ENCODE measurements at regions of chr14 and their contacts with region 1.

Region 1: GRCh38 chr14:23539248-23540140 is 12.1 kb downstream of the ZFHX2 start:
- DNase-seq: no peak
- ATAC-seq: peak; percentile 54 to 77 (median 67)
- H3K4me3 ChIP-seq: no peak overlapping the region
- H3K27ac ChIP-seq: no peak overlapping the region
- H3K4me1 ChIP-seq: no peaks in the 10 kb centered on the region
- H3K27me3 ChIP-seq: no peaks in the 10 kb centered on the region
- CTCF ChIP-seq: peak; percentile 70

Region 2: DNA sequence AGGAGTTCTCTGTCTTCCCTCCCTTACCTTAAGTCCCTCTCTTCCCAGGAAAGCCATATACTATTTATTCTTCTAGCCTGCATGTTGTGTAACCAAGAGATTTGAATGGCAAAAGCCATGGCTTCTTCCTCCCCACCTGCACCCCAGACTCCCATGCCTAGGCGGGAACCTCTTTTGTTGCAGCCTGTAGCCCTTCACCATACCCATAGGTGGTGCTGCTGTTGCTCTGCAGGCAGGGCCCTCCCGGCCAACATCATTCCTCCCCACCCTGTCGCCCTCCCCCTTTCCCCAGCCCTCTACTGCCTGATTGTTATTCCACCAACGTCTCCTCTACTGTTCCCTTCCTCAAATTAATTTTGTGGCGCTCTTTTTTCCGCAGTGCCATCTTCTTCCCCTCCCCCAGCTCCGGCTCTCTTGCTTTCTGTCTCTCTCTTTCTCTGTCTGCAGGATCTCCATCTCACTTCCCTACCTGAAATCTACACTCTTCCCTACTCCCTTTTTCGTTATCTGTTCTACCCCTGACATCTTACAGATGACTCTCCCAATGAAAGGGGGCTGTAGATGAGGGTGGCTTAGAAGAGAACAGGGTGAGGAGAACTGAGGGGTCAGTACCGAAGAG is 56.1 kb before region 1 on chr14:
- intact Hi-C with region 1: loop called in 1 of 2 experiments (anchors 5 kb)
- DNase-seq: no peak
- ATAC-seq: no peak
- H3K4me3 ChIP-seq: no peak overlapping the region
- H3K27ac ChIP-seq: no peak overlapping the region
- H3K4me1 ChIP-seq: no peaks in the 10 kb centered on the region
- H3K27me3 ChIP-seq: no peaks in the 10 kb centered on the region
- CTCF ChIP-seq: no peak

Measured in psoas muscle (tissue), 8 donors.